Activated naive CD4-positive, alpha-beta T cell treated with anti-CD3 and anti-CD28 coated beads for 36 hours (primary cell): ENCODE measurements at regions of chr10 and their contacts with region 1.

Region 1: DNA sequence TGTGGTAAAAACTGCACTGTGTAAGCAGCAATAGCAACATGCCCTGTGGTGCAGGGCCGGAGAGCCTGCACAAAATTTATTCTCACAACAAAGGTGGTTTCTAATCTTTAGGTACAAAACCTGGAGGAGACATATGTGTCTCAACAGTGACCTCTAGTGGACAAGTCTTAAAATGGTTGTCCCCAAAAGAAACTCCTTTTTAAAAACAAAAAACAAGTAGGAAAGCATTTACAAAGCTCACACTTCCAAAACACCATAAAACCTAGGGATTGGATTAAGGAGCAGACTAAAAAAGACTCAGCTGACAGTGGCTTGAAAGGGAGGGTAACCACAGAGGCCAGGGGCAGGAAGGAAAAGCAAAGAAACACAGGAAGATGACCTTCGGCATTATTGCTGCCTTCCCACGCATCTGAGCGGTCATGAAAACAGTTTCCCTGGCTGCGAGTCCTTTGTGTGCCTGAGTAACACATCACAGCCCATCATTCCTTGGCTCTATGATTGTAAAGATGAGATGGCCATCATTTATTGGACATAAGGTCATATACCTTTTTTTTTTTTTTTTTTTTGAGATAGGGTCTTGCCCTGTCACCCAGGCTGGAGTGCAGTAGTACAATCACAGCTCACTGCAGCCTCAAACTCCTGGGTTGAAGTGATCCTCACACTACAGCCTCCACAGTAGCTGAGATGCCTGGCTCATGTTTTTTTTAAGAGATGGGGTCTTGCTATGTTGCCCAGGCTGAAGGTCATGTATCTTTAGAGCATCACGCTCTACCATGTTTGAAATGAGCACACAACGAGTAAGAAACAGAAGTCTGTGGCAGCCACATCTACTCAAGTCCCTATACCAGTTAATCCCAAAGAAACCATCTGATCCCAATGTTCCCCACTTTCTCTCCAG is 39.5 kb downstream of the RSU1 start:
- DNase-seq: no peak
- H3K4me3 Mint-ChIP-seq: no peak overlapping the region
- H3K27ac Mint-ChIP-seq: peak overlapping the region; percentile 72
- H3K4me1 Mint-ChIP-seq: peaks cover 36% of the 10 kb centered on the region
- H3K27me3 Mint-ChIP-seq: no peaks in the 10 kb centered on the region

Region 2: DNA sequence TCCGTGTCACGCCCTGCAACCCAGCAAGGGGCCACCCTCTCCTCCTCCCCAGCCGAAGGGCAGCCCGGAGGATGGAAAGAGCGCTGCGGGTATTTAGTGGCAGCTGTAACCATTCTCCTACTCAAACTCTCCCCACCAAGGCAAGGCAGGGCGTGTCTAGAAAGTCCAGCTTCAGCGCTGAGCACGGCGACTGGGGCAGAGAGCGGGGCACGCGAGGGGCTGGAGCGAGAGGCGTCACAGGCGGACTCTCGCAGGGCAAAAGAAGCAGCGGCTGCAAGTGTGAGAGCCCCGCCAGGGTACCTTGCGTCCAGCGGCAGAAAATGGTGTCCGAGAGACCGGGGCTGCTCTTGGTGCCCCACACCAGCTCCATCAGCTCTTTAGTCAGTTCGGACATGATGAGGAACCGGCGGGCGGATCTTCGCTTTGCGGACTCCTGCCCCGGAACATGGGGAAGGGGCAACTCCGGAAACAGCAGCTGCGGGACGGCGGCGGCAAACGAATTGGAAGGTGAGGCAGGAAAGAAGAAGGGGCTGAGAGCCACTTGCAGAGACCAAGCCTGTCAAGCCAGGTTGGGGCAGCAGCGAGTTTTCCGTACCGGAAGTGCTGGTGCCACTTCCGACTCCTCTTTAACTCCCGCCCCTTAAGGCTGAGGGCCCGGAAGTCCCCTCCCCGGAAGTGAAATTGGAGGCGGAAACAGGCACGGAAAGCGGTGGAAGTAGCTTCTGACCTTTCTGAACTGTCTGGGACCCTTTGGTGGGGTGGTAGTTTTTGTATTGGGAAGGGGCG is 917.6 kb before region 1 on chr10 and contains the start of gene MINDY3:
- CTCF ChIA-PET with region 1: interaction called, 3 read pairs
- intact Hi-C with region 1: loop called (anchors 5 kb)
- DNase-seq: peak; percentile 89
- H3K4me3 Mint-ChIP-seq: peak within 1 kb of the TSS; percentile 99
- H3K27ac Mint-ChIP-seq: peak within 1 kb of the TSS; percentile 90
- H3K4me1 Mint-ChIP-seq: peaks cover 28% of the 10 kb centered on the region
- H3K27me3 Mint-ChIP-seq: peaks cover 9% of the 10 kb centered on the region
- total RNA-seq, gene MINDY3: 9.0 to 12.0 TPM

Region 3: DNA sequence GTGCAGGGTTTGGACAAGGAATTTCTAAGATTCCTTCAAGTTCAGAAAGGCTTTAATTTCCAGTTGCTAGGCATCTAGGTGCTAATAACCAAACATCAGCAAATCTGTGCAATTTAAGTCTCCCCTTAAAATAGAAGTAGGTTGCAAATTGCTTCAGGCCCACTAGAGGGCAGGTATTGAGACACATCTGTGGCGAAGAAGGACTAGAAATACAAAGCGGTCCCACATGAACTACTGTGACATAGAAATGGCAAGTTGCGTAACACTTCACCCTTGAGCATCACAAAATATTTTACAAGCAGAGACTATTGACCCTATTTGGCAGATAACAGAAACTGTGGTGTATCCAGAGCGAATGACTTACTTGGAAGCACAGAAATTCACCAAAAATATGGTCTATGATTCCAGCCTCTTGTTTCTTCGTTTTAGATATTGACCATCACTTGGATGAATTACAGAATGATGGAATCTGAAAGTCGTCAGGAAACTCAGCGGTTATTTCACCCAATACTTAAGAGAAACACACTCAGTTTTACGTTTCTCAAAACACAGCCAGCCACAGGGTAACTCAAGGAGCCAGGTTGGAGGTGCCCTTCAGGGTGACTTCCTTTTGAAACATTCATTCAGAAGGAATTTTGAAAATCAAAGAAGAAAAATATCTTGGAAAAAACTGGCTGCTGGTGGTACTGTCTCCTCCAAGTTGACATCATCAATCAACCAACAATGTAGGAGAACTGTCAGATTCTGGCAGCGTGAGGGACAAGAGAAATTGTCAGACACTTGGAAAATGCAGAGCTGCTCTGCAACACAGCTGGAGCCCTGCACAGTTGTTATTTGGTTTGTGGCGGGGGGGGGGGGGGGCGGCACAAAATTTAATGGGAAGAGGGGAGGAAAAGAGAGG is 661.1 kb before region 1 on chr10:
- CTCF ChIA-PET with region 1: interaction called, 3 read pairs
- intact Hi-C with region 1: loop called (anchors 1 kb)
- DNase-seq: peak; percentile 8
- H3K4me3 Mint-ChIP-seq: no peak overlapping the region
- H3K27ac Mint-ChIP-seq: no peak overlapping the region
- H3K4me1 Mint-ChIP-seq: no peaks in the 10 kb centered on the region
- H3K27me3 Mint-ChIP-seq: no peaks in the 10 kb centered on the region

Region 4: GRCh38 chr10:16436758-16437539 is 340.8 kb before region 1 on chr10 and contains the start of gene PTER:
- CTCF ChIA-PET with region 1: interaction called, 3 read pairs
- intact Hi-C with region 1: loop called (anchors 1 kb)
- DNase-seq: peak; percentile 100
- H3K4me3 Mint-ChIP-seq: peak within 1 kb of the TSS; percentile 85
- H3K27ac Mint-ChIP-seq: peak within 1 kb of the TSS; percentile 88
- H3K4me1 Mint-ChIP-seq: peaks cover 43% of the 10 kb centered on the region
- H3K27me3 Mint-ChIP-seq: no peaks in the 10 kb centered on the region
- total RNA-seq, gene PTER: 15.0 to 16.7 TPM

Region 5: DNA sequence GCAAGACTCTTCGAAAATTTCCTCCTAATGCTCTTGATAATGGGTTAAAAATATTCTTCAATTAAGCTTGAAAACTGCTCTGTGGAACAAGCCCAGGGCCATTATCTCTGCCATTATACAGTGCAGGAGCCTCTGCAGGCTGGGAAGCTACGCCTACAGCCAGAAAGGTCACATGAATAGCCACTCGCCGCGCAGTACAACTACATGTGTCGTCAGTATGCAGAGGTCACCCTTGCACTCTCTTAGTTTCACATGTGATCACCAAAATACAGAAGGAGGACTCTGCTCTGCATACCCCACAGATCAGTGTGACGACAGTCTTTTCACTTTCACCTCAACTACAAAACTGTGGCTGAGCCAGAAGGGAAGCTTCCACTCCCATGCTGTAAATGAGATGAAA is 114.3 kb before region 1 on chr10:
- CTCF ChIA-PET with region 1: no interaction called
- intact Hi-C with region 1: loop called (anchors 1 kb)
- DNase-seq: no peak
- H3K4me3 Mint-ChIP-seq: no peak overlapping the region
- H3K27ac Mint-ChIP-seq: no peak overlapping the region
- H3K4me1 Mint-ChIP-seq: peaks cover 21% of the 10 kb centered on the region
- H3K27me3 Mint-ChIP-seq: no peaks in the 10 kb centered on the region

Region 6: GRCh38 chr10:16817125-16818019 is 39.6 kb after region 1 on chr10 and contains the start of gene RSU1:
- CTCF ChIA-PET with region 1: interaction called, 9 read pairs
- intact Hi-C with region 1: loop called (anchors 1 kb)
- DNase-seq: peak; percentile 100
- H3K4me3 Mint-ChIP-seq: peak within 1 kb of the TSS; percentile 89
- H3K27ac Mint-ChIP-seq: peak within 1 kb of the TSS; percentile 90
- H3K4me1 Mint-ChIP-seq: peaks cover 23% of the 10 kb centered on the region
- H3K27me3 Mint-ChIP-seq: no peaks in the 10 kb centered on the region
- total RNA-seq, gene RSU1: 43.4 to 45.1 TPM

Region 7: DNA sequence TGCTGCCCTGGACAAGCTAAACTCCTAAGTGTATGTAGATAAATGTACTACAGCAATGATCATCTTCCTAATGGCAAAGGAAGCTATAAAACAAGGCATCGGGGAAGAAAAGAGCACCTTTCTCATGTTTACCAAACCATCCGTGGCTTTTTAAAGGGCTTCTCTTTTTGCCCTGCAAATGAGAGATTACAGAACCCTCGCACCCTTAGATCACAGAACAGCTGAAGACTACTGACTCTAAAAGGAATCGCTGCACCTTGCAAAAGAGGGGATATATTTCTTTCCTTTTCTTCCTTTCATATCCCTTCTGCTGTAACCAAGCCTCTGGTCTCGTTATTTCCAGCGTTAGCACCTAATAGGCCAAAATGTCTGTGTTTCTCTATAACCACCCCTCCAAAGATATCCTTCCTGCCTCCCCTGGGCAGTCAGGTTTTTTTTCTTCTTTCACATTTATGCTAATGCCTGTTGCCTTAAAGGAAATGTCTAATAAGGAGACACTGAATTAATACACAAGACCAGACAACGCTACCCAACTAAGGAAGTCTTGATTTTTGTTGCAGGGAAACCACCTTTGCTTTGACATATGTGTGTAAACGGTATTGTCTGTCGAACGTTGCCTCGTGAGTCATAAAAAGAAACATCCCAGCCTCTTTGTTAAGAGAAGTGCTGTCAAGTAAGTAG is 666.1 kb after region 1 on chr10:
- CTCF ChIA-PET with region 1: no interaction called
- intact Hi-C with region 1: loop called (anchors 1 kb)
- DNase-seq: peak; percentile 61
- H3K4me3 Mint-ChIP-seq: peak overlapping the region; percentile 46
- H3K27ac Mint-ChIP-seq: peak overlapping the region; percentile 28
- H3K4me1 Mint-ChIP-seq: peaks cover 16% of the 10 kb centered on the region
- H3K27me3 Mint-ChIP-seq: peaks cover 3% of the 10 kb centered on the region